ENCODE measurements at regions of chr7 and their contacts with region 1.

Region 1: GRCh38 chr7:66114793-66115649 is at the start of gene CRCP:
- DNase-seq: peak; percentile 78 to 87 (median 83)
- ATAC-seq: peak; percentile 94
- H3K4me3 ChIP-seq: peak within 1 kb of the TSS; percentile 87
- H3K4me3 Mint-ChIP-seq: peak within 1 kb of the TSS; percentile 94 to 98 (median 96)
- H3K27ac ChIP-seq: peak within 1 kb of the TSS; percentile 95
- H3K27ac Mint-ChIP-seq: peak within 1 kb of the TSS; percentile 94 to 98 (median 96)
- H3K4me1 ChIP-seq: peaks cover 14 to 26% of the 10 kb centered on the region in 2 donors
- H3K4me1 Mint-ChIP-seq: peaks cover 28 to 56% (median 47%) of the 10 kb centered on the region in 7 donors
- H3K27me3 ChIP-seq: no peaks in the 10 kb centered on the region
- H3K27me3 Mint-ChIP-seq: no peaks in the 10 kb centered on the region
- total RNA-seq, gene CRCP: 29.8 to 37.9 (median 34.0) TPM

Region 2: GRCh38 chr7:64313740-64314491 is 1801.1 kb before region 1 on chr7 and contains the start of gene ZNF736:
- CTCF ChIA-PET with region 1: no interaction called
- POLR2A ChIA-PET with region 1: no interaction called
- intact Hi-C with region 1: loop called in 1 of 2 experiments (anchors 10 kb)
- DNase-seq: peak; percentile 64 to 92 (median 87)
- ATAC-seq: peak; percentile 100
- H3K4me3 ChIP-seq: peak within 1 kb of the TSS; percentile 81
- H3K4me3 Mint-ChIP-seq: peak within 1 kb of the TSS; percentile 90 to 100 (median 98)
- H3K27ac ChIP-seq: peak within 1 kb of the TSS; percentile 88
- H3K27ac Mint-ChIP-seq: peak within 1 kb of the TSS; percentile 88 to 100 (median 97)
- H3K4me1 ChIP-seq: peaks cover 8 to 12% of the 10 kb centered on the region in 2 donors
- H3K4me1 Mint-ChIP-seq: peaks cover 22 to 54% (median 39%) of the 10 kb centered on the region in 7 donors
- H3K27me3 ChIP-seq: no peaks in the 10 kb centered on the region
- H3K27me3 Mint-ChIP-seq: no peaks in the 10 kb centered on the region
- total RNA-seq, gene ZNF736: 22.8 to 54.2 (median 35.8) TPM

Region 3: GRCh38 chr7:66075590-66076461 is 39.2 kb before region 1 on chr7 and contains the start of gene ASL:
- CTCF ChIA-PET with region 1: interaction called, 3 read pairs
- POLR2A ChIA-PET with region 1: interaction called, 3 read pairs
- intact Hi-C with region 1: loop called (anchors 1 kb)
- DNase-seq: peak; percentile 71 to 96 (median 78)
- ATAC-seq: peak; percentile 99
- H3K4me3 ChIP-seq: peak within 1 kb of the TSS; percentile 83
- H3K4me3 Mint-ChIP-seq: peak within 1 kb of the TSS; percentile 80 to 96 (median 87)
- H3K27ac ChIP-seq: peak within 1 kb of the TSS; percentile 69
- H3K27ac Mint-ChIP-seq: peak within 1 kb of the TSS in 8 of 9 donors; percentile 42 to 89 (median 77)
- H3K4me1 ChIP-seq: peaks cover 6 to 7% of the 10 kb centered on the region in 2 donors
- H3K4me1 Mint-ChIP-seq: peaks cover 5 to 20% (median 19%) of the 10 kb centered on the region in 7 donors
- H3K27me3 ChIP-seq: no peaks in the 10 kb centered on the region
- H3K27me3 Mint-ChIP-seq: peaks cover 0 to 2% (median 0%) of the 10 kb centered on the region in 5 donors
- total RNA-seq, gene ASL: 11.3 to 29.7 (median 12.8) TPM

Region 4: GRCh38 chr7:66204822-66205740 is 90.1 kb after region 1 on chr7 and contains the start of gene TPST1:
- CTCF ChIA-PET with region 1: no interaction called
- POLR2A ChIA-PET with region 1: no interaction called
- intact Hi-C with region 1: loop called (anchors 1 to 10 kb)
- DNase-seq: peak; percentile 69 to 83 (median 78)
- ATAC-seq: peak; percentile 94
- H3K4me3 ChIP-seq: peak within 1 kb of the TSS; percentile 49
- H3K4me3 Mint-ChIP-seq: peak within 1 kb of the TSS; percentile 90 to 98 (median 92)
- H3K27ac ChIP-seq: peak within 1 kb of the TSS; percentile 60
- H3K27ac Mint-ChIP-seq: peak within 1 kb of the TSS in 8 of 9 donors; percentile 75 to 91 (median 83)
- H3K4me1 ChIP-seq: peaks cover 0 to 30% of the 10 kb centered on the region in 2 donors
- H3K4me1 Mint-ChIP-seq: peaks cover 26 to 57% (median 46%) of the 10 kb centered on the region in 7 donors
- H3K27me3 ChIP-seq: no peaks in the 10 kb centered on the region
- H3K27me3 Mint-ChIP-seq: peaks cover 0 to 48% (median 6%) of the 10 kb centered on the region in 5 donors
- total RNA-seq, gene TPST1: 0.70 to 5.0 (median 2.7) TPM

Region 5: DNA sequence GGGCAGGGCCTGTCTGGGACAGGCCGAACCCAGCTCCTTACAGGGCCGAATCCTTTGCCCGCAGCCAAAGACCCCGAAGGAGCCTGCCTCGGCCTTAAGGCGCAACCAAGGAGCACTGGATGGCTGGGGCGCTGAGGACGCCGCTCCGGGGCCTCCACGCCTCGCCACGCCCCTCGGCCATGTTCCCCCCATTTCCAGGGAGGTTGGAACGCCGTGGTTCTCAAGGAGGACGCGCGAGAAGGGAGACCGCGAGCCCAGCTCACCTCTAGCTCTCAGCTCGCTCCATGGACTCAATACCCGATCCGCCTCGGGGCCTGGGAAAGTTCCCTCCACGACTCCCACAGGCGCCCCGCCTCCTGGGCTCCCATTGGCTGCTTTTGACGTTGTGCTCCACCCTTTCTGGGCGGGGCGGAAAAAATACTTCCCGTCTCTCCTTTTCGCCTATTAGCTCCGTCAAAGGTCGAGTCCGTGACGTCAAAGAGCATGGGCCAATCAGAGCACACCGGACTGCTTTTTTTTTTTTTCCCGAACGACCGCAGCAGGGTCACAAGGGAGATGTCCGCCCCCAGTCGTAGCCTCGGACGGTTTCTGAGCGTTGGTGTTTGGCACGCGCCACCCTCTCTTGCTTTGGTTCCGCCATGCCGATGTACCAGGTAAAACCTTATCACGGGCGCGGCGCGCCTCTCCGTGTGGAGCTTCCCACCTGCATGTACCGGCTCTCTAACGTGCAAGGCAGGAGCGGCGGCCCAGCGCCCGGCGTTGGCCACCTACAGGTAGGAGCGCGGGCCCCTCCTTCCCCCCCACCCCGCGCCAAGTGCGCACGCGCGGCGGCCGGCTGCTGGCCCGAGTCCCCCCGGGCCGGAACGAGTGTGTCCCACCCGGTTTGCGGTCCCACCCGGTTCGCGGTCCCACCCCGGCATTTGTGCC is 1187.4 kb after region 1 on chr7:
- CTCF ChIA-PET with region 1: no interaction called
- POLR2A ChIA-PET with region 1: no interaction called
- intact Hi-C with region 1: loop called in 1 of 2 experiments (anchors 2 kb)
- DNase-seq: peak; percentile 90 to 97 (median 95)
- ATAC-seq: peak; percentile 89
- H3K4me3 ChIP-seq: peak overlapping the region; percentile 74
- H3K4me3 Mint-ChIP-seq: peak overlapping the region; percentile 89 to 99 (median 96)
- H3K27ac ChIP-seq: peak overlapping the region; percentile 88
- H3K27ac Mint-ChIP-seq: peak overlapping the region; percentile 87 to 99 (median 98)
- H3K4me1 ChIP-seq: peaks cover 3 to 7% of the 10 kb centered on the region in 2 donors
- H3K4me1 Mint-ChIP-seq: peaks cover 10 to 36% (median 25%) of the 10 kb centered on the region in 7 donors
- H3K27me3 ChIP-seq: no peaks in the 10 kb centered on the region
- H3K27me3 Mint-ChIP-seq: no peaks in the 10 kb centered on the region